ENCODE measurements at regions of chrX and their contacts with region 1.

Region 1: GRCh38 chrX:51336584-51336983 is 4.0 kb downstream of the NUDT10 start:
- DNase-seq: no peak
- H3K4me3 ChIP-seq: no peak overlapping the region
- H3K27ac ChIP-seq: no peak overlapping the region
- H3K4me1 ChIP-seq: no peaks in the 10 kb centered on the region
- H3K27me3 ChIP-seq: peaks cover 14% of the 10 kb centered on the region
- CTCF ChIP-seq: peak; percentile 63

Region 2: DNA sequence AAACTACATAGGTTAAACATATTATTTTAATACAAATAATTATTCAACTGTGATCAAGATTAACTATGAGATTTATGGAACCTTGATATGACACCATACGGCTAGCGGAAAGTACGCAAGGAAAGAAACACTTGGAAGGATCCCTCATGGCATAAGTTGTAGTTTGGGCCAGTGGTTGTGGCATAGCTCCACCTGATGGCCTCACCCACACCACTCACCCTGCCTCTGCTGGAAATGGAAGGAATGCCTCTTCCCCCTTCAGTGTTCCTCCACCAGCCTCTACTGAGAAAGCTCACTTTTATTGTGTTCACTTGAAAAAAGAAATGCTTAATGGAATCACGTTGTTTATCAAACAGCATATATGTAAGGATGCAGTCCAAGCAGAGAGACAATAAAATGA is 339.7 kb before region 1 on chrX:
- intact Hi-C with region 1: no loop called
- DNase-seq: no peak
- H3K4me3 ChIP-seq: no peak overlapping the region
- H3K27ac ChIP-seq: no peak overlapping the region
- H3K4me1 ChIP-seq: no peaks in the 10 kb centered on the region
- H3K27me3 ChIP-seq: no peaks in the 10 kb centered on the region
- CTCF ChIP-seq: no peak

Region 3: GRCh38 chrX:51420610-51421009 is 84.0 kb after region 1 on chrX:
- intact Hi-C with region 1: loop called (anchors 10 kb)
- DNase-seq: no peak
- H3K4me3 ChIP-seq: no peak overlapping the region
- H3K27ac ChIP-seq: no peak overlapping the region
- H3K4me1 ChIP-seq: no peaks in the 10 kb centered on the region
- H3K27me3 ChIP-seq: no peaks in the 10 kb centered on the region
- CTCF ChIP-seq: peak; percentile 68

Region 4: GRCh38 chrX:51955200-51955599 is 618.6 kb after region 1 on chrX:
- intact Hi-C with region 1: no loop called
- DNase-seq: no peak
- H3K4me3 ChIP-seq: no peak overlapping the region
- H3K27ac ChIP-seq: no peak overlapping the region
- H3K4me1 ChIP-seq: no peaks in the 10 kb centered on the region
- H3K27me3 ChIP-seq: no peaks in the 10 kb centered on the region
- CTCF ChIP-seq: no peak

Measured in left ventricle myocardium inferior (tissue), 1 donor.